K562 (cell line): ENCODE measurements at regions of chr22 and their contacts with region 1.

Region 1: GRCh38 chr22:23088199-23088604 is 17.9 kb downstream of the GNAZ start:
- DNase-seq: peak; percentile 51 to 59 (median 55)
- ATAC-seq: peak; percentile 4
- H3K4me3 ChIP-seq: no peak overlapping the region
- H3K27ac ChIP-seq: no peak overlapping the region
- H3K4me1 ChIP-seq: peaks cover 17 to 38% of the 10 kb centered on the region in 2 experiments; a peak in 4 of 5 replicates
- H3K27me3 ChIP-seq: peaks cover 63 to 93% of the 10 kb centered on the region in 2 experiments; a peak in 4 of 5 replicates
- CTCF ChIP-seq: no peak
- EP300 ChIP-seq: no peak
- POLR2A ChIP-seq: no peak
- RAD21 ChIP-seq: no peak

Region 2: DNA sequence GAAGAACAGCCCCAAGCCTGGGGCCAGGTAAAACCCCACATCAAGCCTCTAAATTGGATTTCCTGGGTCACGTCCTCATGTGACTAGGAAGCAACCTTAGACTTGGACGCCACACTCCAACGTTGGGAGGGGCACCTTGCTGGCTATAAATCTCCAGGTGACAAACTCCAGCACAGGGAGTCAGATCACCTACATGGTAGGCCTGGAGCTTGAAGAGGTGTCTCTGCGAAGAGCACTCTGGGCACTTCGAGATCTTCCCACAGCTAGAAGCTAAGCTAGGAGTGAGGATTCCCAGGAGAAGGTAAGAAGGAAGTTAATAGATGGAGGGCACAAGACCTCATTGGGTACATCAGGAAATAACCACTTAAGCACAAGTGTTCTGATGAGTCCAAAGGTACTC is 95.0 kb before region 1 on chr22:
- CTCF ChIA-PET with region 1: no interaction called
- POLR2A ChIA-PET with region 1: no interaction called
- in situ Hi-C with region 1: no loop called
- intact Hi-C with region 1: no loop called
- DNase-seq: peak in 2 of 4 experiments; percentile 39 to 41
- ATAC-seq: peak; percentile 18; the same call in 2 of the 3 replicates
- H3K4me3 ChIP-seq: no peak overlapping the region
- H3K27ac ChIP-seq: no peak overlapping the region
- H3K4me1 ChIP-seq: no peaks in the 10 kb centered on the region
- H3K27me3 ChIP-seq: peaks cover 2 to 5% of the 10 kb centered on the region in 2 experiments; a peak in 2 of 5 replicates
- CTCF ChIP-seq: no peak
- EP300 ChIP-seq: no peak
- POLR2A ChIP-seq: no peak
- RAD21 ChIP-seq: no peak

Region 3: DNA sequence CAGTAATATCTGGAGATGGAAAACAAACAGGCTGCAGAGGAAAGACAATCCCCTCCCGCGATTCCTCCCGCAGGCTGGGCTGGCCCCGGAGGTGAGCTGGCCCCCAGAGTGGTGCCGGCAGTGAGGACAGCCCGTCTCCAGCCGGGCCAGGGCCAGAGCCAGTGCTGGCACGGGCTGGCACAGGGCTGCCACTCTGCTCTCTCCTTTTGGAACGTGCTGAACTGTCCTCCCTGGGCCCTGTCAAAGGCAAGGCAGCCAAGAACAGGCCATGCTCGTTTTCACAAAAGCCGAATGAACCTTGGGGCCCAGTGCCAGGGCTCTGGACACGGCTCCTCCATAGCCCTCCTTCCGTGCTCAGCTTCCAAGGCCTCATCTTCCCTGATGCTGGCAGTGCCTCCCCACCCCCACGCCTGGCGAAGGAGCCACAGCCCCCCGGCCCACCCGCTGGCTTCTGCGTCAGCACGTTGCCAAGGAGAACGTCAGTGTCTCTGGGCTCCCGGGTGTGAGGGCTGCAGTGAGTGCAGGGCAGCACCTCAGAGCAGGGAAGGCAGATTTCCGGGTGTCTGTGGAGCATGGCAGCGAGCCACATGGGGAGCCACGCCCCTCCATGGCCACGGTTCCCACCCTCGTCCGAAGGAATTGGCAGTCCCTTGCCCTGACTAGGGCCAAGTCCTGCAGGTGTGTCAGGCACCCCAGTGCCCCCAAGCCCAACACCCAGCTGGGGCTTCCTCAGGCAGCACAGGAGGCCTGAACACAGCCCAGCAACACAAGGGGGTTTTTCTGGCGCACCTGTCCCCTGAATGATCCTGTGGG is 10.7 kb after region 1 on chr22:
- CTCF ChIA-PET with region 1: no interaction called
- POLR2A ChIA-PET with region 1: interaction called, 178 read pairs
- in situ Hi-C with region 1: no loop called
- intact Hi-C with region 1: no loop called
- DNase-seq: peak in 2 of 4 experiments; percentile 63
- ATAC-seq: no peak
- H3K4me3 ChIP-seq: no peak overlapping the region
- H3K27ac ChIP-seq: no peak overlapping the region
- H3K4me1 ChIP-seq: peaks cover 0 to 45% of the 10 kb centered on the region in 2 experiments; a peak in 3 of 5 replicates
- H3K27me3 ChIP-seq: peaks cover 95 to 100% of the 10 kb centered on the region in 2 experiments
- CTCF ChIP-seq: no peak
- EP300 ChIP-seq: no peak
- POLR2A ChIP-seq: no peak
- RAD21 ChIP-seq: no peak

Region 4: GRCh38 chr22:23113067-23113846 is 25.1 kb after region 1 on chr22:
- CTCF ChIA-PET with region 1: no interaction called
- POLR2A ChIA-PET with region 1: interaction called, 414 read pairs
- in situ Hi-C with region 1: no loop called
- intact Hi-C with region 1: no loop called
- DNase-seq: peak in 3 of 4 experiments; percentile 52 to 63 (median 55)
- ATAC-seq: no peak
- H3K4me3 ChIP-seq: no peak overlapping the region
- H3K27ac ChIP-seq: no peak overlapping the region
- H3K4me1 ChIP-seq: peaks cover 0 to 20% of the 10 kb centered on the region in 2 experiments; a peak in 1 of 5 replicates
- H3K27me3 ChIP-seq: peaks cover 43 to 100% of the 10 kb centered on the region in 2 experiments; a peak in 4 of 5 replicates
- CTCF ChIP-seq: peak in 1 of 3 experiments; percentile 4; a peak in 1 of 6 replicates
- EP300 ChIP-seq: no peak
- POLR2A ChIP-seq: no peak
- RAD21 ChIP-seq: no peak